ENCODE measurements at regions of chr9 and their contacts with region 1.

Region 1: GRCh38 chr9:36258208-36258988 is at the start of gene GNE:
- DNase-seq: peak; percentile 96 to 100 (median 98)
- H3K4me3 ChIP-seq: peak within 1 kb of the TSS; percentile 62 to 97 (median 86)
- H3K27ac ChIP-seq: peak within 1 kb of the TSS; percentile 79 to 98 (median 95)
- H3K27me3 ChIP-seq: no peaks in the 10 kb centered on the region
- CTCF ChIP-seq: peak in 18 of 56 donors; percentile 4 to 42 (median 22)
- total RNA-seq, gene GNE: 14.4 to 29.7 (median 22.9) TPM

Region 2: DNA sequence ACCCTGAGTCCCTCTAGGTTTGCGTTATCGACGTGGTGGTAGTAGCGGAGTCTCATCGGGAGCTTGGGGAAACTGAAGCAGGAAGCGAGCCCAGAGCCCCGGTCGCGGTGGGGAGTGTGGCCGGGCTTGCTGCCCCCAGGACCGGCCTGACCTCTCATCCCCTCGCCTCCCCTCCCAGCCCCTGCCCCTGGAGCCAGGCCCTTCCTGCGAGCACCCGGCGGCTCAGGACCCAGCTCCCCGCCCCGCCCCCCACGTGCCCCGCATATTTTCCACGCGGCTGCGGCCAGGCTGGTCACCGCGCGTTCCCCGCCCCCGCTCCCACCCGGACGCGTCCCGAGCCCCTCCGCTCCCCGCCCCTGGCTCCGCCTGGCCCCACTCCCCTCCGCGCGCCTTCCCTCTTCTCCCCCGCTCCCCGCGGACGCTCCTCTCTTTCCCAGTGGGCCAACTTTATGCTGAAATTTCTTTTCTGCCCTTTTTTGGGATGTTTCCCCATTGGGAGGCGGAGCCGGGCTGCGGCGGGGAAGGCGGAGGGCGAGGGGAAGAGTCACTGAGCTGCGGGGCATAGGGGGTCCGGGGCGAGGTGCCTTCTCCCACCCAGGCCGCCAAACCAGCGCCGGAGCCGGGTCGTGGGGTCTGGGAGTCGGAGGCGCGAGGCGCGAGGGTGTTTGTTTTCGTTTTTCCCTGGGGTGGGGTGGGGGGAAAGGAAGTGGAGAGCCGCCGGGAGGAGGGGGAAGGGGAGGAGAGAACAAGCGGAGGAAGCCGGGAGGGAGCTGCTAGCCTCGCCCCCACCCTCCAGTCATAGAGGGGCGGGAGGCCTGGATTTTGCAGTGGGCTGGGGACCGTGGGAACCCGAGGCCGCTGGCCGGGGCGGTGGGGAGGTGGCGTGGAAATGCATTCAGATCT is 567.7 kb before region 1 on chr9:
- intact Hi-C with region 1: no loop called
- DNase-seq: peak in 5 of 10 donors; percentile 41 to 70 (median 52)
- H3K4me3 ChIP-seq: peak overlapping the region; percentile 45 to 87 (median 71)
- H3K27ac ChIP-seq: peak overlapping the region in 57 of 59 donors; percentile 8 to 92 (median 80)
- H3K27me3 ChIP-seq: no peaks in the 10 kb centered on the region
- CTCF ChIP-seq: no peak

Region 3: DNA sequence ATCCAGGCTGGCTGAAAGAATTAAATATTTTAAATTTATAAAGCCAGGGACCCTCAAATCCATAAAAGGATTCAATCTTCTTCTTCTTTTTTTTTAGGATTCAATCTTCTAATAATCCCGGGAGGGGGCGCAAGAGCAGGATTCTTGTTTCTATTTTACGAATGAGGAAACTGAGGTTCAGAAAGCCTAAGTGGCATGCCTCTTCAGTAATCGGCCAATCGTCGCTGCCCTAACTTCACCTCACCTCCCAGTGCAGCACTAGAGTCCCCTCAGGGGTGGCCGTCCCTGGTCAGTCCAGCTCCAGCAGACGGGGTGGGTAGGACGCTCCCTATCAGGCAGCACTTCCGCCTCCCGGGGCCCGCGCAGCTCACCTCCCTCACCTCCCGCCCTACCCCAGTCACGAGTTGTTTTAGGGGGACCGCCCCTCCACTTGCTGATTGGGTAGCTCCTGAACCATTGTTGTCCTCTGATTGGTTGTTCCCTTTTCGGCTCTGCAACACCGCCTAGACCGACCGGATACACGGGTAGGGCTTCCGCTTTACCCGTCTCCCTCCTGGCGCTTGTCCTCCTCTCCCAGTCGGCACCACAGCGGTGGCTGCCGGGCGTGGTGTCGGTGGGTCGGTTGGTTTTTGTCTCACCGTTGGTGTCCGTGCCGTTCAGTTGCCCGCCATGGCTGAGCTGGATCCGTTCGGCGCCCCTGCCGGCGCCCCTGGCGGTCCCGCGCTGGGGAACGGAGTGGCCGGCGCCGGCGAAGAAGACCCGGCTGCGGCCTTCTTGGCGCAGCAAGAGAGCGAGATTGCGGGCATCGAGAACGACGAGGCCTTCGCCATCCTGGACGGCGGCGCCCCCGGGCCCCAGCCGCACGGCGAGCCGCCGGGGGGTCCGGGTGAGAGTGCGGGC is 67.8 kb before region 1 on chr9 and contains the start of gene CLTA:
- intact Hi-C with region 1: loop called (anchors 2 kb)
- DNase-seq: peak; percentile 93 to 99 (median 98)
- H3K4me3 ChIP-seq: peak within 1 kb of the TSS; percentile 68 to 100 (median 93)
- H3K27ac ChIP-seq: peak within 1 kb of the TSS; percentile 74 to 98 (median 93)
- H3K27me3 ChIP-seq: no peaks in the 10 kb centered on the region
- CTCF ChIP-seq: peak; percentile 43 to 82 (median 70)
- total RNA-seq, gene CLTA: 76.4 to 215 (median 173) TPM

Region 4: GRCh38 chr9:36218411-36218901 is 39.9 kb before region 1 on chr9:
- intact Hi-C with region 1: loop called in 1 of 2 experiments (anchors 5 kb)
- DNase-seq: peak in 8 of 10 donors; percentile 54 to 77 (median 64)
- H3K4me3 ChIP-seq: no peak overlapping the region
- H3K27ac ChIP-seq: peak overlapping the region in 56 of 59 donors; percentile 6 to 87 (median 70)
- H3K27me3 ChIP-seq: no peaks in the 10 kb centered on the region
- CTCF ChIP-seq: no peak

Region 5: DNA sequence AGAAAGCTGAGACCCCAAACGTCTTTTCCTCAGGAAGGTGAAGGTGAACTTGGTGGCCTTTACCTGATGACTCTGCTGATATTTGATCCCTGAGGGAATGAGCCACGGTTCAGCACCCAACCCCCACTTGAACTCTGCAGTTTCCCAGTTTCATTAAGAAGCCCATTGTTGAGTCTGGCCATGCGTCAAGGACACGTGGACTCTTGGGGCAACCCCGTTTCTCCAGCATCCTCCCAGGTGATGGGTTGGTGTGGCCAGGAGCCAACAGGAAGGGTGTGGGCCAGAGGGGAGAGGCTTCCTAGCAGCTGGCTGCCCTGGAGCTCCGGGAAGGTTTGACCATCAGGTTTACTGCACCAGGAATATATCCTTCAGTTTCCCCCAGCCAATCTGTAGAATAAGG is 59.4 kb after region 1 on chr9:
- intact Hi-C with region 1: loop called (anchors 2 kb)
- DNase-seq: peak in 1 of 10 donors; percentile 11
- H3K4me3 ChIP-seq: no peak overlapping the region
- H3K27ac ChIP-seq: peak overlapping the region in 56 of 59 donors; percentile 12 to 92 (median 83)
- H3K27me3 ChIP-seq: no peaks in the 10 kb centered on the region
- CTCF ChIP-seq: no peak

Region 6: GRCh38 chr9:36328798-36329411 is 70.5 kb after region 1 on chr9:
- intact Hi-C with region 1: loop called in 1 of 2 experiments (anchors 2 kb)
- DNase-seq: peak in 2 of 10 donors; percentile 28 to 49
- H3K4me3 ChIP-seq: peak overlapping the region in 6 of 59 donors; percentile 6 to 34 (median 15)
- H3K27ac ChIP-seq: peak overlapping the region in 1 of 59 donors; percentile 4
- H3K27me3 ChIP-seq: no peaks in the 10 kb centered on the region
- CTCF ChIP-seq: peak; percentile 72 to 96 (median 88)

Region 7: GRCh38 chr9:36400332-36401163 is 142.2 kb after region 1 on chr9:
- intact Hi-C with region 1: loop called in 1 of 2 experiments (anchors 2 kb)
- DNase-seq: peak; percentile 72 to 90 (median 84)
- H3K4me3 ChIP-seq: peak overlapping the region; percentile 61 to 98 (median 86)
- H3K27ac ChIP-seq: peak overlapping the region; percentile 84 to 99 (median 95)
- H3K27me3 ChIP-seq: no peaks in the 10 kb centered on the region
- CTCF ChIP-seq: peak in 28 of 56 donors; percentile 3 to 41 (median 18)